Activated CD8-positive, alpha-beta T cell treated with anti-CD3 and anti-CD28 coated beads, Interleukin-2, amount 10 ng/mL, durations not matched to agents 7 days and 5 days (primary cell): ENCODE measurements at regions of chr1 and their contacts with region 1.

Region 1: GRCh38 chr1:155063550-155064110 is at the start of gene EFNA4:
- DNase-seq: peak; percentile 90
- ATAC-seq: peak; percentile 85
- H3K4me3 Mint-ChIP-seq: peak within 1 kb of the TSS; percentile 89
- H3K27ac Mint-ChIP-seq: peak within 1 kb of the TSS; percentile 51
- H3K4me1 Mint-ChIP-seq: peaks cover 41% of the 10 kb centered on the region
- H3K27me3 Mint-ChIP-seq: no peaks in the 10 kb centered on the region
- total RNA-seq, gene EFNA4: 7.8 to 9.7 TPM

Region 2: DNA sequence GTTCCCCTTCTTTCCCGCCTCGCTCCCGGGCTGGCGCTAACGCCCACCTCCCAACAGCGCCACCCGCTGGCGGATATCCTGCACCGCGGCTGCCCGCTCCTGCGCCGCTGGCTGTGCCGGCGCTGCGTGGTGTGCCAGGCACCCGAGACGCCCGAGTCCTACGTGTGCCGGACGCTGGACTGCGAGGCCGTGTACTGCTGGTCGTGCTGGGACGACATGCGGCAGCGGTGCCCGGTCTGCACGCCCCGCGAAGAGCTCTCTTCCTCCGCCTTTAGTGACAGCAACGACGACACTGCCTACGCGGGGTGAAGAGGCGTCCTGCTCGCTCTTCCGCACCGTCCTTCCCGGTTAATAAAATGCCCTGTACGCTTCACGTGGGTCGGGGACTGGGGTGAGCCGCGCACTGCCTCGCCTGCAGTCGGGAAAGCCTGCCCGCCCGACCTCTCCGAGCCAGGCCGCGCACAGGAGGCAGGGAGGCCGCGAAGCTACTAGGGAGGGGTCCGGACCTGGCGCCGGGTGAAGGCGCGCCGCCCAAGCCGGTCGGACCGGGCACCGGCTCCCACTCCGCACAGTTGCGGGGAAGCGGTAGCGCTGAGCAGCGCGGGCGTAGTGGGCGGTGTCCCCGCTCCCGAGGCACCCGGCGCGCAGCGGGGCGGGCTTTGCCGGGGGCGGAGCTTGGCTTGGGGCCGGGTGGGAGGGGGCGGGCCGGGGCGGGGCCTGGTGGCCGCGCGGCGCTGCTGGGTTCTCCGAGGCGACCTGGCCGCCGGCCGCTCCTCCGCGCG is 12.9 kb before region 1 on chr1 and contains the start of gene ADAM15:
- CTCF ChIA-PET with region 1: interaction called, 205 read pairs
- POLR2A ChIA-PET with region 1: interaction called, 7 read pairs
- DNase-seq: peak; percentile 81
- ATAC-seq: peak; percentile 89
- H3K4me3 Mint-ChIP-seq: peak within 1 kb of the TSS; percentile 83
- H3K27ac Mint-ChIP-seq: peak within 1 kb of the TSS; percentile 85
- H3K4me1 Mint-ChIP-seq: peaks cover 31% of the 10 kb centered on the region
- H3K27me3 Mint-ChIP-seq: peaks cover under 1% of the 10 kb centered on the region
- total RNA-seq, gene ADAM15: 29.7 to 29.8 TPM

Region 3: GRCh38 chr1:155078469-155079209 is 15.0 kb after region 1 on chr1 and contains the start of gene EFNA3:
- CTCF ChIA-PET with region 1: interaction called, 201 read pairs
- POLR2A ChIA-PET with region 1: no interaction called
- DNase-seq: peak; percentile 60
- ATAC-seq: peak; percentile 21
- H3K4me3 Mint-ChIP-seq: peak within 1 kb of the TSS; percentile 59
- H3K27ac Mint-ChIP-seq: peak within 1 kb of the TSS; percentile 56
- H3K4me1 Mint-ChIP-seq: peaks cover 69% of the 10 kb centered on the region
- H3K27me3 Mint-ChIP-seq: peaks cover 39% of the 10 kb centered on the region
- total RNA-seq, gene EFNA3: 3.8 to 5.5 TPM